PC-9 (cell line): ENCODE measurements at regions of chr6 and their contacts with region 1.

Region 1: DNA sequence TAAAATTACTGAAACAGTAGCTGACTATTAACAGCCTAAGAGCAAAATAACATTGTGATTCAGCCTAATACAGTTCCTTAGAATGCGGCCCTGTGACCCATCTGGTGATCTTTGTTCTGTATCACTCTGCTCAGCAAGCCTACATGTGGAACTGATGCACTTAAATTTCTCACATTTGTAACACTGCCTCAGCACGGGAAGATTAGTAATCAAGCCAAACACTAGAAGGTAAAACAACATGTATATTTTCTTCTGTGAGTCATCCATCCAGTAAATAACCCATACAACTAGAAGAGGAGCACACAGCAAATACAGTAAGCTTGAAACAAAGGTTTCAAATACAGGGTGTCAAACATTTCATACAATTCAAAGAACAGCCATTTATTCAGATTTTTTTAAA is 189.7 kb upstream of the NOX3 start:
- DNase-seq: no peak
- H3K4me3 ChIP-seq: no peak overlapping the region
- H3K27ac ChIP-seq: no peak overlapping the region
- H3K4me1 ChIP-seq: peaks cover 11% of the 10 kb centered on the region; the same call in 1 of the 2 replicates
- H3K27me3 ChIP-seq: no peaks in the 10 kb centered on the region
- CTCF ChIP-seq: no peak

Region 2: DNA sequence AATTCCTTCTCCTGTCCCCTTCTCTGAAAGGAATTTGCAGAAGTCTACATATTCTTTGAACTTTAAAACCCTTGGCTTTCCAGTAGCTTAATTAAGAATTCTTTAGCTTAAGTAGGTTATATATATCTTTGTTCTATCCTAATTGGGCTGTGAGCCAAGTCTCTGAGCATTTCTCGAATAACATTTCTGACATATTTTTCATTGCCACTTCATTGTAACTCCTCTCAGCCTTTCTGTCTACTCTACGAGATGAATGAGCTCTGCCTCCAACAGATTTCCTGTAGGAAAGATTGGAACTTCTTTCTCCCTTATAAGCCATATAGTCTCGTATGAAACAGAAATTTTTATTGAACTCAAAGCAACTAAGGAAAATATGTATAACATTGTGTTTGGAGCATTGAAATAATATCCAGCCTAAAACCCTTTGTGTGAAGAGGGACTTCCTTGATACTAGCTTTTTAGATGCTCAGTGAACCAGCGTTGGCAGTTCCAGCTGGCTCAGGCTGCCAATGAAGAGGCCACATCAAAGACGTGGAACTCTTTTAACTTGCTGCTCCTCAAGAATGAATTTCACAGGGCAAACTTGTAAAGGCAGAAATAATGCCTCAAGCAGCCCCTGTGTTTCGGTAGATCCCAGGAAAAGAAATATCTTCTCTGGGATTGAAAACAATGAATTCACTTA is 102.0 kb before region 1 on chr6:
- CTCF ChIA-PET with region 1: no interaction called
- POLR2A ChIA-PET with region 1: no interaction called
- intact Hi-C with region 1: no loop called
- DNase-seq: no peak
- H3K4me3 ChIP-seq: no peak overlapping the region
- H3K27ac ChIP-seq: no peak overlapping the region
- H3K4me1 ChIP-seq: no peaks in the 10 kb centered on the region
- H3K27me3 ChIP-seq: no peaks in the 10 kb centered on the region
- CTCF ChIP-seq: no peak

Region 3: DNA sequence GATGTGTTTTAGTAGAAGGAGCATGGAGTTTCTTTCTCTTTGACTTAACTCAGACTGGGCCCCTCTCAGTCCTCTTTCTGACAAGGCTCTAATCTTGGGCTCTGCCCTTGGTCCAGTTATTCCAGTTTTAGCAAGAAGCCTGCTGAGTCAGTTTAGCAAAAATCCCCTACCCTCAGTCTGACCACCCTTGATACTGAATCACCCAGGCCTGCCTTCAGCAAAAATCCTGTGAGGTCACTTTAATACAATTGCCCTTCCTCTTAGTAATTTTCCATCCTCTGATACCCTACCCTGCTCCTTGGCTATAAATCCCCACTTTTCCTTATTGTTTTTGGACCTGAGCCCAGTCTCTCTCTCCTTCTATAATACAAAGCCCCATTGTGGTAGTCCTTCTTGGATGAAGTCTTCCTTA is 137.0 kb after region 1 on chr6:
- CTCF ChIA-PET with region 1: no interaction called
- POLR2A ChIA-PET with region 1: no interaction called
- intact Hi-C with region 1: loop called (anchors 5 kb)
- DNase-seq: peak; percentile 64 to 97
- H3K4me3 ChIP-seq: peak overlapping the region; percentile 37; the same call in 1 of the 2 replicates
- H3K27ac ChIP-seq: peak overlapping the region; percentile 95
- H3K4me1 ChIP-seq: peaks cover 48% of the 10 kb centered on the region
- H3K27me3 ChIP-seq: no peaks in the 10 kb centered on the region
- CTCF ChIP-seq: no peak

Region 4: GRCh38 chr6:156102129-156102528 is 456.8 kb after region 1 on chr6:
- CTCF ChIA-PET with region 1: no interaction called
- POLR2A ChIA-PET with region 1: no interaction called
- intact Hi-C with region 1: no loop called
- DNase-seq: no peak
- H3K4me3 ChIP-seq: no peak overlapping the region
- H3K27ac ChIP-seq: no peak overlapping the region
- H3K4me1 ChIP-seq: no peaks in the 10 kb centered on the region
- H3K27me3 ChIP-seq: no peaks in the 10 kb centered on the region
- CTCF ChIP-seq: no peak; the same call in 1 of the 2 replicates